ENCODE measurements at regions of chr10 and their contacts with region 1.

Region 1: GRCh38 chr10:132571650-132572535 is 34.3 kb downstream of the INPP5A start:
- DNase-seq: peak; percentile 69
- ATAC-seq: peak; percentile 83
- H3K4me3 Mint-ChIP-seq: no peak overlapping the region
- H3K27ac Mint-ChIP-seq: no peak overlapping the region
- H3K4me1 Mint-ChIP-seq: peaks cover 19% of the 10 kb centered on the region
- H3K27me3 Mint-ChIP-seq: no peaks in the 10 kb centered on the region

Region 2: GRCh38 chr10:132540456-132540855 is 31.4 kb before region 1 on chr10:
- POLR2A ChIA-PET with region 1: interaction called, 10 read pairs
- DNase-seq: no peak
- ATAC-seq: no peak
- H3K4me3 Mint-ChIP-seq: peak overlapping the region; percentile 92
- H3K27ac Mint-ChIP-seq: peak overlapping the region; percentile 77
- H3K4me1 Mint-ChIP-seq: peaks cover 51% of the 10 kb centered on the region
- H3K27me3 Mint-ChIP-seq: no peaks in the 10 kb centered on the region

Region 3: GRCh38 chr10:132551093-132551807 is 20.6 kb before region 1 on chr10:
- POLR2A ChIA-PET with region 1: interaction called, 10 read pairs
- DNase-seq: peak; percentile 59
- ATAC-seq: peak; percentile 77
- H3K4me3 Mint-ChIP-seq: peak overlapping the region; percentile 82
- H3K27ac Mint-ChIP-seq: peak overlapping the region; percentile 95
- H3K4me1 Mint-ChIP-seq: peaks cover 27% of the 10 kb centered on the region
- H3K27me3 Mint-ChIP-seq: no peaks in the 10 kb centered on the region

Measured in activated naive CD8-positive, alpha-beta T cell treated with anti-CD3 and anti-CD28 coated beads, Interleukin-2, amount 10 ng/mL, durations not matched to agents 7 days and 5 days (primary cell).